Heart right ventricle (tissue), 16 donors: ENCODE measurements at regions of chr3 and their contacts with region 1.

Region 1: DNA sequence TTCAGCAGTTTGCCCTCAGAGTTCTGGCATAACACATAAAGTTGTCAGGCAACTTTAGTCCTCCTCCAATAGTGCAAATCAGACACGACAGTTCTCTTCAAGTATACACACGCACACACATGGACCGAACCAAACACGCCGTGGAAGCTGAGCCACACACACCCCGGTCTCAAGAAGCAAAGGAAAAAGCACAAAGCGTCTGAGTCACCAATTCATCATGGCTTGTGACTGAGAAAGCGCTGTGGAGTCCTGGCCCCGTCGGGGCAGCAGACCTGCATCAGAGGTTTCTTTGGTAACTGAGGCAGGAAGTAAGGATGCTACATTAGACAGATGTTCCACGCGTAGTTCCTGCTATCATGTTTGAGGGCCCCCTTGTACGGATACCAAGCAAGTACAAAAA is 85.7 kb downstream of the VGLL4 start:
- DNase-seq: no peak
- ATAC-seq: no peak
- H3K4me3 ChIP-seq: no peak overlapping the region
- H3K27ac ChIP-seq: peak overlapping the region in 7 of 10 donors; percentile 31 to 82 (median 51)
- H3K4me1 ChIP-seq: peaks cover 58 to 99% (median 90%) of the 10 kb centered on the region in 9 donors
- H3K27me3 ChIP-seq: no peaks in the 10 kb centered on the region
- CTCF ChIP-seq: no peak

Region 2: DNA sequence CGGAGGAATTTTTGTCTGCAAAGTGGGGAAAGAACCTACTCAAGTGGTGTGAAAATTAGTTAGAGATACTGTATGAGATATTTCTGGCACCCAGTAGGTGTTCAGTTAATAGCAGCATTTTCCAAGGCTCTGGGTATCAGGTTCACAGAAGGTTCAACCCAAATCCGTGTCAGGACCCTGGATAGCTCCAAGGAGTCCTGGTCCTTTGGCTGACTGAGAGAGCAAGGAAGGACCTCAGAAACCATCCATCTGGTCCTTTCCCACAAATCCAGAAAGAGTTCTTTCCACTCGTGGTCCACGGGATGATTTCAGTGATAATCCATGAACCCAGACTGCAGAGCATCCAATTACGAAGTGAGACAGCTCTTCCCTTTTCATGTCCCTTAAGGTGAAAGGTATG is 690.6 kb before region 1 on chr3:
- intact Hi-C with region 1: no loop called
- DNase-seq: no peak
- ATAC-seq: no peak
- H3K4me3 ChIP-seq: no peak overlapping the region
- H3K27ac ChIP-seq: no peak overlapping the region
- H3K4me1 ChIP-seq: no peaks in the 10 kb centered on the region
- H3K27me3 ChIP-seq: peaks cover 0 to 34% (median 13%) of the 10 kb centered on the region in 7 donors
- CTCF ChIP-seq: no peak

Region 3: GRCh38 chr3:11385891-11386290 is 172.1 kb before region 1 on chr3:
- intact Hi-C with region 1: loop called in 1 of 10 experiments (anchors 10 kb)
- DNase-seq: no peak
- ATAC-seq: peak in 5 of 8 donors; percentile 53 to 64 (median 63)
- H3K4me3 ChIP-seq: no peak overlapping the region
- H3K27ac ChIP-seq: peak overlapping the region in 2 of 10 donors; percentile 9 to 48
- H3K4me1 ChIP-seq: peaks cover 4 to 36% (median 27%) of the 10 kb centered on the region in 9 donors
- H3K27me3 ChIP-seq: no peaks in the 10 kb centered on the region
- CTCF ChIP-seq: no peak